GM12878 (cell line): ENCODE measurements at regions of chr10 and their contacts with region 1.

Region 1: GRCh38 chr10:119199231-119199992 is 8.0 kb upstream of the GRK5 start:
- DNase-seq: no peak
- ATAC-seq: peak; percentile 93
- H3K4me3 ChIP-seq: no peak overlapping the region
- H3K27ac ChIP-seq: no peak overlapping the region
- H3K4me1 ChIP-seq: no peaks in the 10 kb centered on the region
- H3K27me3 ChIP-seq: no peaks in the 10 kb centered on the region
- CTCF ChIP-seq: peak; percentile 72 to 88 (median 80)
- EP300 ChIP-seq: no peak
- POLR2A ChIP-seq: no peak
- RAD21 ChIP-seq: peak; percentile 84

Region 2: DNA sequence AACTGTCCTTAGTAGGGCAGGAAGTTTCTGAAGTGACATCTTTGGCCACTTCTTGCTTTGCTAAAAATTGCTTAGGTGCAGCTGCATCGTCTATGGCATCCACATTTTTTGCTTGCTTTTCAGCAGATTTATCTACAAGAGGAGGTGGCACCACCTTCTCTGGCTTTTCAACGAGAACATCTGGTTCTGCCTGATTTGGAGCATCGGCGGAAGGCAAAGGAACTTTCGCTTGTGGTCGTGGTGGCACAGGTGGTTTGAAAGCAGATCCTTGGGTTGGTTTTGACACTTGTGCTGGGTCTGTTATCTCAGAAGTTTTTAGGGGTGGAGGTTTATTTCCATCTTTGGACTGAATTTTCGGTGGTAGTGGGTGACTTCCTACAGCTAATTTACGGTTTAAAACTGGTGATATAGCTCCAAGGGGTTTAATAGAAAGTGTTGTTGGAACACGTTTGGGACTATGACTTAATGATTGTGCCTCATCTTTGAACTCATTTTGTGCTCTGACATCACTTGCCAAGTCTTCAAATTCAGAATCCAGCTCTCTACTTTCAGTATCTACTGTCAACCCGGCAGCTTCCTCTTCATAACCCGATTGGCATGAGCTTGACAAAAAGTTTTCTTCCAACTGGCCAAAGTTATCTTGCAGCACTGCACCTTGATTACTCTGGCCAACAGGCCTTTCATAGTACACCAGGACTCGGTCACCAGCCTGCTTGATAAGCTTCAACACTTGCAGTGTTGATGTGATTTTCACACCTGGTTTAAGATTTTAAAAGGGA is 1914.5 kb before region 1 on chr10:
- CTCF ChIA-PET with region 1: no interaction called
- POLR2A ChIA-PET with region 1: no interaction called
- RAD21 ChIA-PET with region 1: no interaction called
- SMC1A ChIA-PET with region 1: no interaction called
- in situ Hi-C with region 1: no loop called
- intact Hi-C with region 1: no loop called
- DNase-seq: no peak
- ATAC-seq: no peak
- H3K4me3 ChIP-seq: no peak overlapping the region
- H3K27ac ChIP-seq: no peak overlapping the region
- H3K4me1 ChIP-seq: no peaks in the 10 kb centered on the region
- H3K27me3 ChIP-seq: no peaks in the 10 kb centered on the region
- CTCF ChIP-seq: no peak
- EP300 ChIP-seq: no peak
- POLR2A ChIP-seq: no peak
- RAD21 ChIP-seq: no peak

Region 3: GRCh38 chr10:119080521-119081260 is 118.7 kb before region 1 on chr10 and contains the start of gene EIF3A:
- CTCF ChIA-PET with region 1: interaction called, 11 read pairs
- POLR2A ChIA-PET with region 1: no interaction called
- RAD21 ChIA-PET with region 1: interaction called, 5 read pairs
- SMC1A ChIA-PET with region 1: interaction called, 4 read pairs
- in situ Hi-C with region 1: no loop called
- intact Hi-C with region 1: no loop called
- DNase-seq: peak; percentile 75
- ATAC-seq: peak; percentile 87
- H3K4me3 ChIP-seq: peak within 1 kb of the TSS; percentile 83
- H3K27ac ChIP-seq: peak within 1 kb of the TSS; percentile 94
- H3K4me1 ChIP-seq: peaks cover 11% of the 10 kb centered on the region; the same call in 1 of the 2 replicates
- H3K27me3 ChIP-seq: no peaks in the 10 kb centered on the region
- CTCF ChIP-seq: no peak
- EP300 ChIP-seq: no peak
- POLR2A ChIP-seq: peak; percentile 93
- RAD21 ChIP-seq: no peak
- polyA plus RNA-seq, gene EIF3A: 42.3 to 46.5 TPM

Region 4: GRCh38 chr10:119178372-119179119 is 20.9 kb before region 1 on chr10 and contains the start of gene PRDX3:
- CTCF ChIA-PET with region 1: interaction called, 17 read pairs
- POLR2A ChIA-PET with region 1: interaction called, 3 read pairs
- RAD21 ChIA-PET with region 1: interaction called, 4 read pairs
- SMC1A ChIA-PET with region 1: interaction called, 4 read pairs
- in situ Hi-C with region 1: no loop called
- intact Hi-C with region 1: no loop called
- DNase-seq: peak; percentile 72
- ATAC-seq: peak; percentile 98
- H3K4me3 ChIP-seq: peak within 1 kb of the TSS; percentile 100
- H3K27ac ChIP-seq: peak within 1 kb of the TSS; percentile 74
- H3K4me1 ChIP-seq: peaks cover 14% of the 10 kb centered on the region
- H3K27me3 ChIP-seq: no peaks in the 10 kb centered on the region
- CTCF ChIP-seq: peak in 1 of 3 experiments; percentile 6; a peak in 2 of 6 replicates
- EP300 ChIP-seq: no peak
- POLR2A ChIP-seq: peak; percentile 99
- RAD21 ChIP-seq: no peak
- polyA plus RNA-seq, gene PRDX3: 827 to 1,431 TPM

Region 5: DNA sequence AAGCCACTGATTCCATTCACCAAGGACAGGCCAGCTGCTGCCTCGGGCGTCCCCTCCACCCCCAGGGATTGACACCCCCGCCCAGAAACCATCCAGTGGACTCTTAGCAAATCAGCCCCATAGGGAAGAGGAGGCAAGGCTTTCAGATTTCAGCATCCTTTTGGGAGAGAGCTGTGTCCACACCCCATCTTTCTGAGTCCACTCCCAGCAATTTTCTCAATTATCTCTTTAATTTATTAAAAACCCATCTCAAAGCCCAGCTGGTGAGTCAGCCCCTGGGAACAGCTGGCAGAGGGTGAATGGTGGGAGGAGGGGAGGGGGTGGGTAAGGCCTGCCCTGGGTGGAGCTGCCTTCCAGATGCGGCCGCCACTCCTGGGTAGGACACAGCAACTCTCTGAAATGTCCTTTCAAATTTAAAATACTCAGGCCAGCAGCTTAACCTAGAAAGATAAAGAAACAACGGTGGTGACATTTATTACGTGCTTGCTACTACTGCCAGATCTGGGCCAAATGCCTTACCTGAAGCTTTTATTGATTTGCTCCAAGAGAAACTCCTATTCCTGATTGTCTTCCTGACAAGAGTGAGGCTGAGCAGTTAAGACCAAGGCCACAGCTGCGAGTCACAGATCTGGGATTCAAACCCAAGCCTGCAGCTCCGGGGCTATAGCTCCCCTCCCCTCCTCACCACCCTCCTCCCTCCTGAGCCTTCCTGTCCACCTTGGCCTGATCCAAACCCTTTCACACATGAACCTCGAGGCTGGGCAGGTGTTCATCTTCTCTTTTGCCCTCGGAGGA is 222.7 kb after region 1 on chr10:
- CTCF ChIA-PET with region 1: interaction called, 70 read pairs
- POLR2A ChIA-PET with region 1: no interaction called
- RAD21 ChIA-PET with region 1: interaction called, 29 read pairs
- SMC1A ChIA-PET with region 1: interaction called, 21 read pairs
- in situ Hi-C with region 1: loop called (anchors 5 kb)
- intact Hi-C with region 1: loop called (anchors 1 kb)
- DNase-seq: no peak
- ATAC-seq: no peak
- H3K4me3 ChIP-seq: no peak overlapping the region
- H3K27ac ChIP-seq: no peak overlapping the region
- H3K4me1 ChIP-seq: no peaks in the 10 kb centered on the region
- H3K27me3 ChIP-seq: no peaks in the 10 kb centered on the region
- CTCF ChIP-seq: no peak
- EP300 ChIP-seq: no peak
- POLR2A ChIP-seq: no peak
- RAD21 ChIP-seq: no peak

Region 6: DNA sequence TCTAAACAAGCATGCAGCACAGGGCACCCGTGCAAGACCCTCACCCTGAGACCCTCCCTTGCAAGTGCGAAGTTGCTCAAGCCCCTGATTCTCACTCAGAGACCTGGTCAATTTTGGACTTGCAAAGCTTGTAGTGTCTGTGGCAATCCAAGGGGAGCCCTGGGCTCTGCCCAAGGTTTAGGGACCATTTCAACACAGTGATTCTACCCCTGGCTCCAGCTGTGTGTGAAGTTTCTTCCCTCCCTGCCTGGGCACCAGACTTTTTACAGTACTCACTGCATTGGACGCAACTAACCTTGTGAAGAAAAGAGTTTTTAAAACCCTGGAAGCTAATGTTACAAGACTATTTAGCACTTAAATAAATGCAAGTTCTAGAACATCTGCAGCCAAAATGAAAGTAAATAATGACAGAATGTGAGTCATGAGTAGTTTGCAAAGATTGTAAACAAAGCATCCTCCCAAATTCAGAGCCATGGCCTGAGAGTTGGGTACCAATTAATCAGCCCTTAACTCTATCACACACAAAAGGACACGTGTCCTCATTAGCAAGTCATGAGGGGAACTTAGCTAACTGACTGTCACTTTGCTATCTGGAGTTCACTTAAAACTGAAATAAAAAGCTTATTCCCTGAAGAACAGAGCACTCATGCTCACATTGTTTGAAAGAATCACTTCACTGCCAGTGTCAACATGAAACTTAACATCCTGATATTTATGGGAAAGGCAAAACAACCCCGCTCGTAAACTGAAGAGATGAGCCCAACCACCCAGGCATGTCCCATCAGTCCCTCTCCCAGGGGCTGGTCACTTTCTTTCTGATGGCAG is 295.0 kb after region 1 on chr10:
- CTCF ChIA-PET with region 1: interaction called, 31 read pairs
- POLR2A ChIA-PET with region 1: interaction called, 6 read pairs
- RAD21 ChIA-PET with region 1: interaction called, 25 read pairs
- SMC1A ChIA-PET with region 1: interaction called, 19 read pairs
- in situ Hi-C with region 1: no loop called
- intact Hi-C with region 1: no loop called
- DNase-seq: no peak
- ATAC-seq: no peak
- H3K4me3 ChIP-seq: no peak overlapping the region
- H3K27ac ChIP-seq: no peak overlapping the region
- H3K4me1 ChIP-seq: peaks cover 15% of the 10 kb centered on the region
- H3K27me3 ChIP-seq: no peaks in the 10 kb centered on the region
- CTCF ChIP-seq: no peak
- EP300 ChIP-seq: no peak
- POLR2A ChIP-seq: no peak
- RAD21 ChIP-seq: no peak